ENCODE measurements at regions of chr6 and their contacts with region 1.

Region 1: GRCh38 chr6:93784794-93785693 is 365.7 kb upstream of the EPHA7 start:
- DNase-seq: peak; percentile 84
- ATAC-seq: peak; percentile 97
- H3K4me3 ChIP-seq: peak overlapping the region; percentile 29 to 47
- H3K27ac ChIP-seq: peak overlapping the region; percentile 98
- H3K4me1 ChIP-seq: peaks cover 29% of the 10 kb centered on the region
- H3K27me3 ChIP-seq: no peaks in the 10 kb centered on the region
- CTCF ChIP-seq: no peak

Region 2: DNA sequence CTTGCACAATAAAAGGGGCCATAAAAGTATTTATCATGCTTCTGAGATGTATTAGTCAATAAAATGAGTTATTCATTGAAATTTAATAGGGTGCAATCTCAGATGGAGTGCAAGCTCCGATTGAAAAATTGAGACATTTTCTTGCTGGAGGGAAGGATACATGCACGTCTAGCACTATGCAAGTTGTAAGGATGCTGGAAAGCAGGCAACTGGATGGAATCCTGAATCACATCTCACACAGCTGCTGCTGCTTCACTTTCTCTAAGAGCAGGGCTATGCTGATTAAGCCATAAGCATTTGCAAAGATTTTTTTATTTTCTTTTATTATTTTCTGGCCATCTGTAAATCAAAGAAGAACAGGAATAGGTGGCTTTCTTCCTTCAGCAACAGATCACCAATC is 56.9 kb before region 1 on chr6:
- CTCF ChIA-PET with region 1: no interaction called
- POLR2A ChIA-PET with region 1: no interaction called
- in situ Hi-C with region 1: no loop called
- intact Hi-C with region 1: loop called (anchors 2 kb)
- DNase-seq: no peak
- ATAC-seq: no peak
- H3K4me3 ChIP-seq: no peak overlapping the region
- H3K27ac ChIP-seq: no peak overlapping the region
- H3K4me1 ChIP-seq: no peaks in the 10 kb centered on the region
- H3K27me3 ChIP-seq: no peaks in the 10 kb centered on the region
- CTCF ChIP-seq: no peak

Region 3: DNA sequence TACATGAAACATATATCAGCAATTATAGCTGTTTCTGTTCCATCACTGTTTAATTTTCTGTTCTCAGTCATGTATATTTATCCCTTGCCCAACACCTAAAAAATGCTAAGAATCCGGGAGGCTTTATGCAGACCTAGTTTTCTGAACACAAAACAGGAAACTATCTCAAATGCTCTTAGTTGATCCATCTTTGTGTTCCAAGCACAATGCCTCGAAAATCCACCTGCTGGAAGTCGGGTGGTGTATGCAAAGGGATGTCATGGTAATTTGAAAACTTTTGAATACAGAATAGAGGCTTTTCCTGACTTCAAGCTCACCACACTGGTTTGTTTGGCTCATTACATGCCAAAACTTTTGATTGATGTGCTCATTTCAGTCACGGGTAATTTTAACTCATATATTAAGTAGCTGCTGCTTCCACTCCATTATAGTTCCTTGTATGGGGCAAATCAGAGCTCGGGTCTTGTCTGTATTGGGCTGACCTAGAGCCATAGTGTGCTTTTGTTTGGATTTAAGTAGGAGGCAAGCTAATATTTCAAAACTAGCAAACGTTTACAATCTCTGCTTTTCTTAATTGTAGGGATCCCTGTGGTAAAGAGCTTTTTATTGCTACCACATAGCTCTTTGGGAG is 280.8 kb after region 1 on chr6:
- CTCF ChIA-PET with region 1: no interaction called
- POLR2A ChIA-PET with region 1: no interaction called
- in situ Hi-C with region 1: no loop called
- intact Hi-C with region 1: loop called (anchors 10 kb)
- DNase-seq: no peak
- ATAC-seq: no peak
- H3K4me3 ChIP-seq: no peak overlapping the region
- H3K27ac ChIP-seq: no peak overlapping the region
- H3K4me1 ChIP-seq: no peaks in the 10 kb centered on the region
- H3K27me3 ChIP-seq: no peaks in the 10 kb centered on the region
- CTCF ChIP-seq: no peak

Region 4: GRCh38 chr6:94590416-94590815 is 805.4 kb after region 1 on chr6:
- CTCF ChIA-PET with region 1: no interaction called
- POLR2A ChIA-PET with region 1: no interaction called
- in situ Hi-C with region 1: no loop called
- intact Hi-C with region 1: no loop called
- DNase-seq: no peak
- ATAC-seq: no peak
- H3K4me3 ChIP-seq: no peak overlapping the region
- H3K27ac ChIP-seq: no peak overlapping the region
- H3K4me1 ChIP-seq: no peaks in the 10 kb centered on the region
- H3K27me3 ChIP-seq: no peaks in the 10 kb centered on the region
- CTCF ChIP-seq: no peak